ENCODE measurements at regions of chr22 and their contacts with region 1.

Region 1: GRCh38 chr22:24156913-24157821 is 24.1 kb upstream of the SUSD2 start:
- DNase-seq: peak; percentile 75 to 87 (median 84)
- ATAC-seq: peak; percentile 91
- H3K4me3 ChIP-seq: peak overlapping the region; percentile 97
- H3K4me3 Mint-ChIP-seq: peak overlapping the region; percentile 73 to 97 (median 94)
- H3K27ac ChIP-seq: peak overlapping the region; percentile 79
- H3K27ac Mint-ChIP-seq: peak overlapping the region; percentile 83 to 93 (median 89)
- H3K4me1 ChIP-seq: peaks cover 55 to 60% of the 10 kb centered on the region in 2 donors
- H3K4me1 Mint-ChIP-seq: peaks cover 60 to 89% (median 75%) of the 10 kb centered on the region in 7 donors
- H3K27me3 ChIP-seq: no peaks in the 10 kb centered on the region
- H3K27me3 Mint-ChIP-seq: no peaks in the 10 kb centered on the region

Region 2: GRCh38 chr22:23786752-23787599 is 370.2 kb before region 1 on chr22 and contains the start of gene SMARCB1:
- CTCF ChIA-PET with region 1: no interaction called
- POLR2A ChIA-PET with region 1: no interaction called
- intact Hi-C with region 1: loop called in 1 of 2 experiments (anchors 2 kb)
- DNase-seq: peak; percentile 80 to 90 (median 87)
- ATAC-seq: peak; percentile 94
- H3K4me3 ChIP-seq: peak within 1 kb of the TSS; percentile 85
- H3K4me3 Mint-ChIP-seq: peak within 1 kb of the TSS; percentile 81 to 94 (median 91)
- H3K27ac ChIP-seq: peak within 1 kb of the TSS; percentile 99
- H3K27ac Mint-ChIP-seq: peak within 1 kb of the TSS; percentile 89 to 98 (median 96)
- H3K4me1 ChIP-seq: peaks cover 11 to 17% of the 10 kb centered on the region in 2 donors
- H3K4me1 Mint-ChIP-seq: peaks cover 13 to 54% (median 41%) of the 10 kb centered on the region in 7 donors
- H3K27me3 ChIP-seq: no peaks in the 10 kb centered on the region
- H3K27me3 Mint-ChIP-seq: no peaks in the 10 kb centered on the region
- total RNA-seq, gene SMARCB1: 47.1 to 81.1 (median 54.2) TPM

Region 3: GRCh38 chr22:24011735-24012068 is 145.5 kb before region 1 on chr22:
- CTCF ChIA-PET with region 1: interaction called, 3 read pairs
- POLR2A ChIA-PET with region 1: interaction called, 11 read pairs
- intact Hi-C with region 1: loop called (anchors 1 to 2 kb)
- DNase-seq: peak in 2 of 9 donors; percentile 10 to 19
- ATAC-seq: no peak
- H3K4me3 ChIP-seq: peak overlapping the region; percentile 75
- H3K4me3 Mint-ChIP-seq: peak overlapping the region; percentile 88 to 98 (median 96)
- H3K27ac ChIP-seq: peak overlapping the region; percentile 78
- H3K27ac Mint-ChIP-seq: peak overlapping the region; percentile 93 to 99 (median 97)
- H3K4me1 ChIP-seq: peaks cover 4 to 10% of the 10 kb centered on the region in 2 donors
- H3K4me1 Mint-ChIP-seq: peaks cover 12 to 52% (median 39%) of the 10 kb centered on the region in 7 donors
- H3K27me3 ChIP-seq: no peaks in the 10 kb centered on the region
- H3K27me3 Mint-ChIP-seq: no peaks in the 10 kb centered on the region

Region 4: DNA sequence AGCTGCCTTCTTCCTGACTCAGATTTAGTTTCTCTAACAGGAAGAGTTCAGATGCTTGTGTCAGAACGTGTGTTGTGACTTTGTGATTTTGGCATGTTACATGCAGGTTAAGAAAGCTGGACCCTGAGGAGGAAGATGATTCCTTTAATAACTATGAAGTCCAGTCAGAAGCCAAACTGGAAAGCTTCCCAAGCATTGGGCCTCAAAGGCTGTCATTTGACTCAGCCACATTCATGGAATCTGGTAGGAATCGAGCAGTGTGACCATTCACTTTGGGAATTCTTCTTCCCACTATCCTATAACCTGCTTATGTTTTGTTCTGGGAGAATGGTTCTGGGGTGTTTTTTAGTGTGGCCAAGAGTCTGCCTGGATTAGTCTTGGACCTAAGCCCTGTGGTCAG is 98.0 kb before region 1 on chr22:
- CTCF ChIA-PET with region 1: no interaction called
- POLR2A ChIA-PET with region 1: no interaction called
- intact Hi-C with region 1: no loop called
- DNase-seq: no peak
- ATAC-seq: no peak
- H3K4me3 ChIP-seq: no peak overlapping the region
- H3K4me3 Mint-ChIP-seq: no peak overlapping the region
- H3K27ac ChIP-seq: no peak overlapping the region
- H3K27ac Mint-ChIP-seq: peak overlapping the region in 1 of 9 donors; percentile 36
- H3K4me1 ChIP-seq: no peaks in the 10 kb centered on the region
- H3K4me1 Mint-ChIP-seq: peaks cover 0 to 12% (median 0%) of the 10 kb centered on the region in 7 donors
- H3K27me3 ChIP-seq: no peaks in the 10 kb centered on the region
- H3K27me3 Mint-ChIP-seq: no peaks in the 10 kb centered on the region

Region 5: DNA sequence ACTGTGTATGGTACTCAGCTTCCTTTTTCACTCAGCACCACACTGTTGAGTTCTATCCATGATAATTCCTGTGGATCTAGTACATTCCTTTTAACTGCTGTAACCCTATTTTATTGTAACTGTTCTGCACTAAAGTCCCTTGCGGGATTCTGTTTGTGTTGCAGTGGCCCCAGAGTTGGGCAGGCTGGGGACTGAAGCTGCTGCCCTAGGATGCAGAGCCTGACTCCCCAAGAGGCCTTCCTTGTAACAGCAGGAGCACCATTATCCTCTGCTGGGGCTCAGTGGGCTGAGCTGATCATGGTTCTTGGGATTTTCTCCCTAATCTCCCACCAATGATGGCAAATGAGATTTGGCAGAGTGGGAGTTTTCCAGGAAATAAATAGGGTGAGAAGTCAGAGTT is 68.4 kb before region 1 on chr22:
- CTCF ChIA-PET with region 1: no interaction called
- POLR2A ChIA-PET with region 1: no interaction called
- intact Hi-C with region 1: no loop called
- DNase-seq: no peak
- ATAC-seq: no peak
- H3K4me3 ChIP-seq: no peak overlapping the region
- H3K4me3 Mint-ChIP-seq: no peak overlapping the region
- H3K27ac ChIP-seq: no peak overlapping the region
- H3K27ac Mint-ChIP-seq: peak overlapping the region in 1 of 9 donors; percentile 22
- H3K4me1 ChIP-seq: no peaks in the 10 kb centered on the region
- H3K4me1 Mint-ChIP-seq: peaks cover 0 to 11% (median 0%) of the 10 kb centered on the region in 7 donors
- H3K27me3 ChIP-seq: no peaks in the 10 kb centered on the region
- H3K27me3 Mint-ChIP-seq: no peaks in the 10 kb centered on the region

Region 6: DNA sequence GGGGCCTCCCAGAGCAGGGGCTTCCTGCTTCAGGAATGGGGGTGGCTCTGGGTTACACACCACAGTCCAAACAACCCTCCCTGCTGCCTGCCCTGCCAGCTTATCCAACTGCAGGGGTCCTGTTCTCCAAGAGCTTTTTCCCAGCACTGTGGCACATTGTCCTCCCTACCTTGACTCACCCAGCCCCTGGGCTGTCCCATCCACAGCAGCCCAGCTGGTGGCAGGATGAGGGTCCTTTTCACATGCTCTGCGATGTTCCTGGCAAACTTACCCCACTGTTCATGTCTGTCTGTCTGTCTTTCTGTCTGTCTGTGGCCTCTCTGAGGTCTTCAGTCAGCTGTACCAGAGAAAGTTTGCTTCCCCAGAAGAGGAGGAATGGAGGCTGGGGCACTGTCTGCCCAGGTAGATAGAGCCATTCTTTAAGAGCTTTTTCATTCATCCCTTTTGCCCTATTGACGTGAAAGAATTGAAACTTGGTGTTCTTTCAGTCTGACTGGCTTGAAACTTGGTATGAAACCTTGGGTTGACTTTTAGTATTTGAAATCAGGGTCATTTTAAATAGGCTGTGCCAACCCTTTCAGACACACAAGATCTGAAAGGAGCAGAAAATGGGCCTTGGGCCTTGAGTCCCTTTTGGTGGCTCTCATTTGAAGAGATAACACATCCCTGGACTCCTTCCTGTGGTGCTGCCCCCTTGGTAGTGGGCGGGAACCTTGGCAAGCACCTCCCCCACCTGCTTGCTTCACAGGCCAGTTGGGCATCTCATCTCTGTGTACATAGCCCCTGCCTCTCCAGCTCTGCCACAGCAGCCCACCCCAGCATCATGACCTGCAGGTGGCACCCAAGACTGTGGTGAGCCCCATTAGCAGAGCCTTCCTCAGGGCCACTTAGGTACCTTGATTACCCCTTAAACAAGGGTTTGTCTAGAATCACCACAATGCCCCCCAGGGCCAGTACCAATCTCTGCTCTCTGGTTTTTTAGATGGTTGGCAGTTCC is 50.5 kb before region 1 on chr22:
- CTCF ChIA-PET with region 1: interaction called, 19 read pairs
- POLR2A ChIA-PET with region 1: interaction called, 3 read pairs
- intact Hi-C with region 1: loop called in 1 of 2 experiments (anchors 1 kb)
- DNase-seq: peak in 7 of 9 donors; percentile 26 to 39 (median 30)
- ATAC-seq: peak; percentile 68
- H3K4me3 ChIP-seq: no peak overlapping the region
- H3K4me3 Mint-ChIP-seq: no peak overlapping the region
- H3K27ac ChIP-seq: peak overlapping the region; percentile 14
- H3K27ac Mint-ChIP-seq: peak overlapping the region in 8 of 9 donors; percentile 25 to 92 (median 46)
- H3K4me1 ChIP-seq: no peaks in the 10 kb centered on the region
- H3K4me1 Mint-ChIP-seq: peaks cover 0 to 24% (median 4%) of the 10 kb centered on the region in 7 donors
- H3K27me3 ChIP-seq: no peaks in the 10 kb centered on the region
- H3K27me3 Mint-ChIP-seq: no peaks in the 10 kb centered on the region

Region 7: DNA sequence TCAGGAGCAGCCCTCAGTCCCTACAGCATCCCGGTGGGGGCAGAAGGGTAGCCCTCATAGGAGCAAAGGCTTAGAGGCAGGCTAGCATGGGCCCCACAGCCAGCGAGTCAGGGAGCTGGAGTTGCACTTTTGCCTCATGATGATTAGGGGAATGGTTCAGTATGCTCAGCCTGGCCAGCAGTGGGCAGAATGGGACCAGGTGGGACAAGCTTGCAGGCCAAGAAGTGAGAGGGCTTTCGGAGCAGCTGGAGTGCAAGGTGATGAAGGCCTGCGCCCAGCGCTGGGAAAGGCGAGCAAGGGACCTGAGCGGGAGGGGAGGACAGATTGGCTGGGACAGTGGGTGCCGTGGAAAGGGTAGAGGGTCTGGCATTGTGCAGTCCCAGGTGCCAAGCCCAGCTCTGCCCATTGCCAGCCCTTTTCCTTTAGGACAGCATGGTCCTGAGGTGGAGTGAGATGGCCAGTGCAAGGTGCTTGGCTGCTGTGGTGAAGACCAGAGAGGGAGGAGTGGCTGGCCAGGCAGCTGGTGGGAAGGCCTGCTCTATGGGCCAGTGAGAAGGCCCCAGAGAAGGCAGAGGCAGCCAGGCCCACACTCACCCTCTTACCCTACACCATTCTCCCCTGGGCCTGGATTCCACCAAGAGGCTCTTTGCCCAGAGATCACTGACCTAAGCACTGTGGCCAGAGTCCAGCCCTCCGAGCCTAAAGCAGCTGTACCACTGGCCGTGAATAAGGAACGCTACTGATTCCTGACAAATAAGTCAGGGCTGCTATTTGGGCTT is 23.8 kb before region 1 on chr22:
- CTCF ChIA-PET with region 1: interaction called, 109 read pairs
- POLR2A ChIA-PET with region 1: interaction called, 296 read pairs
- intact Hi-C with region 1: loop called in 1 of 2 experiments (anchors 1 kb)
- DNase-seq: peak in 7 of 9 donors; percentile 43 to 65 (median 57)
- ATAC-seq: peak; percentile 62
- H3K4me3 ChIP-seq: no peak overlapping the region
- H3K4me3 Mint-ChIP-seq: peak overlapping the region in 8 of 10 donors; percentile 2 to 79 (median 60)
- H3K27ac ChIP-seq: peak overlapping the region; percentile 62
- H3K27ac Mint-ChIP-seq: peak overlapping the region; percentile 56 to 95 (median 89)
- H3K4me1 ChIP-seq: peaks cover 6 to 18% of the 10 kb centered on the region in 2 donors
- H3K4me1 Mint-ChIP-seq: peaks cover 18 to 33% (median 29%) of the 10 kb centered on the region in 7 donors
- H3K27me3 ChIP-seq: no peaks in the 10 kb centered on the region
- H3K27me3 Mint-ChIP-seq: no peaks in the 10 kb centered on the region

Region 8: DNA sequence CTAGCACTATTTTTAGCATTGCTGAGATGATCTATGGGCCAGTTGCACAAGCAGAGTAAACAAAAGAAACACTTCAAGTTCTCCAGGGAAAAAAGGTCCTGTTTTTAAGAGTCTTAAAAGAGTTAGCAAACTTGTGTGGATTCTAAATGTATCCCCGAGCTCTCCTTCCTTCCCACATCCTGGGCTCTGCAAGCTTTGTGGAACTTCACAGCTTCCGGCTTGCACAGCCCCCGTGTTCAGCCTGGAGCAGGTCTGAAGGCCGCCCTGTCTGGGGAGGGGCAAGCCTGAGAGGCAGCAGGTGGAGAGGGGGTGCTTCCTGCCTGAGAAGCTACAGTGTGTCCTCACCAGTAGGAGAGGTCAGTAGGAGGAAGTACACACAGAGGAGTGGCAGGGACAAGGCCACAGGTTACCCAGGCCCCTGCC is 11.0 kb before region 1 on chr22:
- CTCF ChIA-PET with region 1: interaction called, 53 read pairs
- POLR2A ChIA-PET with region 1: interaction called, 296 read pairs
- intact Hi-C with region 1: loop called (anchors 1 to 2 kb)
- DNase-seq: peak in 7 of 9 donors; percentile 38 to 46 (median 41)
- ATAC-seq: peak; percentile 74
- H3K4me3 ChIP-seq: no peak overlapping the region
- H3K4me3 Mint-ChIP-seq: peak overlapping the region; percentile 40 to 83 (median 76)
- H3K27ac ChIP-seq: peak overlapping the region; percentile 61
- H3K27ac Mint-ChIP-seq: peak overlapping the region; percentile 80 to 94 (median 91)
- H3K4me1 ChIP-seq: peaks cover 36 to 60% of the 10 kb centered on the region in 2 donors
- H3K4me1 Mint-ChIP-seq: peaks cover 48 to 95% (median 92%) of the 10 kb centered on the region in 7 donors
- H3K27me3 ChIP-seq: no peaks in the 10 kb centered on the region
- H3K27me3 Mint-ChIP-seq: no peaks in the 10 kb centered on the region

Region 9: DNA sequence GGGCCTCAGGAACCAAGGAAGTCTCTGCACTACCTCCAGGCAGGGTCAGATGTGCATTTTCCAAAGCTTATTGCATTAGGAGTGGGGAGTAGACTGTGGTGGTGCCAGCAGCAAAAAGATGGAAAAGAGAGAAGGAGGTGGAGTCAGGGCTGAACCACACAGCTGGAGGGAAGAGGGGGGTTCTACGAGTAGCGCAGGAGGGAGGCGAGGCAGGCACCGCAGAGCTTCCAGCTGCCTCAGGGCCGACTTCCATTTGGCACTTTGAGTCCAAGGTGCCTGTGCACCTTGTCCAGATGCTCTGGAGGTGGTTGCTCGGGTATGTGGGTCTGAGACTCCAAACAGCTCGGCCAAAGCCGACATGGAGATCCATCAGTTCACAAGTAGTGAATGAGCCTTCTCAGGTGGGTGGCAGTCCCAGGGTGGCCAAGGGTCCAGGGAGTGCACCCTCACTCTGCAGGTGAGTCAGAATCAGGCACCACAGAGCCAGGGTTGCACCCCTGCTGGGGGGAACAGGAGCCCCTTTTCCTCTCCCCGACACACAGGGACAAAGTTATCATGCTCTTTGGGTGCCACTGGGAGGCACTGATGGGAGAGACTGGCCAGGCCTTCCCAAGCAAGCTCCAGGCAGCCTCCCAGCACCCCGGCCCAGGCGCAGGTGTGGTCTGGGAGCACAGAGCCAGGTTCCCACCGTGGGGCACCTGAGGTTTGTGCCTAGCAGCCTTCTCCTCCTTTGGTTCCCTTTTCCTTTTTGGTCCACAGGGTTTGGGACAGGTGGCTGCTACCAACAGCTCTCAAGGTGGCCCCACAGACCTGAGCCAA is 57.5 kb after region 1 on chr22:
- CTCF ChIA-PET with region 1: no interaction called
- POLR2A ChIA-PET with region 1: no interaction called
- intact Hi-C with region 1: no loop called
- DNase-seq: no peak
- ATAC-seq: no peak
- H3K4me3 ChIP-seq: no peak overlapping the region
- H3K4me3 Mint-ChIP-seq: no peak overlapping the region
- H3K27ac ChIP-seq: no peak overlapping the region
- H3K27ac Mint-ChIP-seq: peak overlapping the region in 1 of 9 donors; percentile 49
- H3K4me1 ChIP-seq: no peaks in the 10 kb centered on the region
- H3K4me1 Mint-ChIP-seq: peaks cover 0 to under 1% (median 0%) of the 10 kb centered on the region in 7 donors
- H3K27me3 ChIP-seq: no peaks in the 10 kb centered on the region
- H3K27me3 Mint-ChIP-seq: peaks cover 0 to 5% (median 0%) of the 10 kb centered on the region in 5 donors

Region 10: DNA sequence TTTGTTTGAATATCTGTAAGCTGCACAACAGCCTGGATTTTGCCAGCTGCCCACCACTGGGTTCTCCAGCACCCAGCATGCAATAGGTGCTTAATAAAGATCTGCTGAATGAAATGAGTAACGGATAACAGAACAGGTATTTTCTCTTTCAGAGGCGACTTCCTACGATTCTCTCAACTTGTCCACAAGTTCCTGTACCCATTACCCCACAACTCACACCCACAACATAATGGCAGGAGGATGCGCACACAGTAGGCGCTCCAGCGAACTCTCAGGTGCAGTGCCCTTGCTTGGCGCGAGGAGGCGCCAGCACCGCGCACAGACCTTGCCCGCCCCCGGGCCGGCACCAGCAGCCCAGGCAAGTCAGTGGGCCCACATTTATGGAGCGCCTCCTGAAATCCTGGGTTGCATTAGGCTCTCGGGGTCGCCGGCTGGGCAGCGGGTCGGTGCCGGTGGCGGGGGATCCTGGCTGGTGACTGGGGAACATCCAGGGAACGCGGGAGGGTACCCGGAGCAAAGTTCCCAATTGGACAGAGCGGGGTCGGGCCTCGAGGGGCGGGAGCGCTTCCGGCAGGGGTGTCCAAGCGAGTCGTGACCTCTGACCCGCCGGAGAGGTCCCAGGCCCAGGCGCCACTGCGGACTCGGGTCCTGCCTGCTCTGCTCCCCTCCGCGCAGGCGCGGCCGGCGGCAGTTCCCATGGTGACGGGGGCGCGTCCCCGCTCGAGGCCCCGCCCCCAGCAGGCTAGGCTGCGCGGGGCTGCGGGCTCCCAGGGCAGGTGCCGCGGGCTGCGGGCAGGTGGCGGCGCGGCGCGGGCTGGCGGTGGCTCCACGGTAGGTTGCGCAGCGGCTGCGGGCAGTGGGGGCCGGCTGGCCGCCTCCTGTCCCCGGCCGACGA is 795.0 kb after region 1 on chr22 and contains the start of gene KIAA1671:
- CTCF ChIA-PET with region 1: no interaction called
- POLR2A ChIA-PET with region 1: no interaction called
- intact Hi-C with region 1: loop called in 1 of 2 experiments (anchors 5 kb)
- DNase-seq: peak; percentile 78 to 95 (median 88)
- ATAC-seq: peak; percentile 96
- H3K4me3 ChIP-seq: peak within 1 kb of the TSS; percentile 86
- H3K4me3 Mint-ChIP-seq: peak within 1 kb of the TSS; percentile 64 to 88 (median 80)
- H3K27ac ChIP-seq: no peak within 1 kb of the TSS
- H3K27ac Mint-ChIP-seq: peak within 1 kb of the TSS in 5 of 9 donors; percentile 49 to 83 (median 65)
- H3K4me1 ChIP-seq: peaks cover 8 to 9% of the 10 kb centered on the region in 2 donors
- H3K4me1 Mint-ChIP-seq: peaks cover 4 to 32% (median 16%) of the 10 kb centered on the region in 7 donors
- H3K27me3 ChIP-seq: peaks cover 3% of the 10 kb centered on the region in 2 donors
- H3K27me3 Mint-ChIP-seq: peaks cover 48 to 74% (median 55%) of the 10 kb centered on the region in 5 donors
- total RNA-seq, gene KIAA1671: 2.8 to 19.0 (median 4.5) TPM

Measured in naive thymus-derived CD4-positive, alpha-beta T cell (primary cell).